Activated CD4-positive, alpha-beta memory T cell treated with anti-CD3 and anti-CD28 coated beads, Interleukin-2, amount 10 ng/mL, durations not matched to agents 7 days and 5 days (primary cell): ENCODE measurements at regions of chr11 and their contacts with region 1.

Region 1: GRCh38 chr11:126194121-126194543 is 17.3 kb downstream of the RPUSD4 start:
- DNase-seq: peak; percentile 44
- H3K4me3 Mint-ChIP-seq: no peak overlapping the region
- H3K27ac Mint-ChIP-seq: no peak overlapping the region
- H3K4me1 Mint-ChIP-seq: no peaks in the 10 kb centered on the region
- H3K27me3 Mint-ChIP-seq: no peaks in the 10 kb centered on the region

Region 2: DNA sequence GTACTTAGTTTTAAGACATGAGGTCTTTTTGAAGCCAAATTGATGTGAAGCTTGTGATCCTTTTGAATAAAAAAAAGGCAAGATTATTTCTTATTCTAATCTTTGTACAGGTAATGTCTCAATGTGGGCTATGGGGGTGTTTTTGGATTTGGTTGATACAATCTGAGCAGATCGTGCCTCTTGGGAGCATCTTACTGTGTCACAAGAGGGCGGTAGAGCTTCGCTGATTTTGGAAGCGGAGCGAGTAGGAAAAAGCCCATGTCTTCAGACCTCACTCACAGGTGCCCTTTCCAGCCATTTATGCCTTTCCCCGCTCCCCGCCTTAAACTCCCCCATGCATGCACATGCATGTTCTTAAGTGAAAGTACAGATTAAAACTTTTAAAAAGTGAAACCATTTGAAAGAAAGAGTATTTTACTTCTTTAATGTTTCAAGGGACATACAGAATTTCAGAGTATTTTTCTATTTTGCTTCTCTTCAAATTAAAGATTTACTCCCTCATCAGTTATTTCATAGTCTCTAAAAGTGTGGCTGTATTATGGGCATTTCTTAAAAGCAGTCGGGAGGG is 271.0 kb before region 1 on chr11:
- CTCF ChIA-PET with region 1: interaction called, 42 read pairs
- POLR2A ChIA-PET with region 1: no interaction called
- DNase-seq: peak; percentile 62
- H3K4me3 Mint-ChIP-seq: no peak overlapping the region
- H3K27ac Mint-ChIP-seq: no peak overlapping the region
- H3K4me1 Mint-ChIP-seq: no peaks in the 10 kb centered on the region
- H3K27me3 Mint-ChIP-seq: peaks cover 21% of the 10 kb centered on the region

Region 3: DNA sequence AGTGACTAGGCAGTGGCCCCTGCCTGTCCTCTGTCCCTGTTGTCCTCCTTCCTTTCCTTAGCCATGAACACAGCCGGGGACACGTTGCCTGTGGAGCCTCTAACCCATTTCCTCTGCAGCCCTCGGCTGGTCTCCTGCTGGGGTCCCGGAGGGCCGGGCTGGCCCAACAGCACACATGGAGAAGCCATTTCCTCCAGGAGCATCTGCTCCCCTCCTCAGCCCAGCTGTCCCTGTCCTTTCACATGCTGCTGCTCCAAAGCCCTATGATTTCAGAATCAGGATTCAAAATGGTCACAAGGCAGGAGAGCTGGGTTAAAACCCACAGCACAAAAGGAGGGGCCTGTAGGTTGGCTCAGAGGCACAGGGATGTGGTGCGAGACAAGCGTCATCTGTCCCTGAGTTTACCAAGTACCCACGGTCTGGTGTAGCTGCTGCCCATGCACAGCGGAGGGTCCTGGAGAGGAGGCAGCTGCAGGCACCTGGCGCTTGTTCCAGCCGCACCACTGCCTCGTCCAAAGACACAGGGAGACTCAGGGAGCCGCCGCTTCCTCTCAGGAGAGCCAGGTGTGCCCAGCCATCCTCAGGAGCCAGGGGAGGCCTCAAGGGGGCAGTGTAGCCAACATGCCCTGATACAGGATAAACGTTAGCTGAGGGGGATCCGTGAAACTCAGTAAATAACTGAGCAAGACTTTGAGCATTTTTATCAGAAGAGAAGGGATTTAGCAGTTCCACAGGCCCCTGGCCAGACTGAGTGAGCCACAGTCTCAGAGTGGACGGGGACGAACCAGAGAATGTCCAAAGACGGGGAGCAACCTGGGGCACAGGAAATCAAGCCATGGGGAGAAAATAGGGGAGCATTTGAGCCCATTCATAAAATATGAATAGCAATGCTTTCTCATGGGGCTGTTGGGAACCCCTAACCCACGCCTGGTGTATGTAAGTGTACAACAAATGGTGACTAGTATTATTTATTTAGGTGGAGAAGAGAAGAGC is 252.2 kb before region 1 on chr11:
- CTCF ChIA-PET with region 1: interaction called, 75 read pairs
- POLR2A ChIA-PET with region 1: no interaction called
- DNase-seq: peak; percentile 52
- H3K4me3 Mint-ChIP-seq: no peak overlapping the region
- H3K27ac Mint-ChIP-seq: no peak overlapping the region
- H3K4me1 Mint-ChIP-seq: peaks cover 13% of the 10 kb centered on the region
- H3K27me3 Mint-ChIP-seq: no peaks in the 10 kb centered on the region